T-cell (primary cell): ENCODE measurements at regions of chr15 and their contacts with region 1.

Region 1: DNA sequence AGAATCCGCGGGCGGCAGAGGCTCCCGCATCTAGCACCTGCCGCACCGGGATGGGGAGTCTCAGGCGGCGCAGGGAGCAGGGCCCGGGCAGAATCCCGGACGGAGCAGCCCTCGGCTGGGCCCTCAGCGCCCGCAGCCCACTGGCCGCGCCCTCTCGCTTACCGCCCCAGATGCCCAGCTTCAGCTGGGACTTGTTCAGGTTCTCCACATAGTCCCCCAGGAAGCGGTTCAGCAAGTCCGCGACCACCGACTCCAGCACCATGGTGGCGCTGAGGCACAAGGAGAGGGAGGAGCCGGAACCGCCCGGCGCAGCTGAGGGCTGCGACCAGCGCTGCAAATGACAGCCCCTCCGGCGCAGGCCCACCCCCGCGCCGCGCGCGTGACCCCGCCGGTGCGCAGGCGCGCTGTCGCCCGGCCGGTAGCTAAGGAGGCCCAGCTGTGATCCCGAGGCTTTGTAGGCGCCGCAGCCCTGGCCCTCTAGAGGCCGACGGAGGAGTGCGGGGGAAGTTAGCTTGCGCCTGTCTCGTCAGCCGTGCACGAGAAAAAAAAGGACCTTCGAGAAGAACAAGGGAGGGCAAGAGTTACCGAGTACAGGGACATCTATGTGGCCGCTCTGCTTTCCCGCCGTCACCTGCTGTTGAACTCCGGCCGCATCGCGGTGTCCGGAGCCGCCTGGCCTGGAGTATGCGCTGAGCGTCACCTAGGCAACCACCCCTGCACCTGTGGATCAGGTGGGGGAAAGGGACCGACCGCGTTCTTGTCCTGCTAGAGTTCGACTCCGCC is at the start of gene VPS13C:
- DNase-seq: peak; percentile 82 to 95 (median 87)
- ATAC-seq: peak; percentile 88 to 95 (median 93)
- H3K4me3 ChIP-seq: peak within 1 kb of the TSS; percentile 59 to 80
- H3K4me3 Mint-ChIP-seq: peak within 1 kb of the TSS; percentile 91 to 99 (median 96)
- H3K27ac ChIP-seq: peak within 1 kb of the TSS; percentile 87
- H3K27ac Mint-ChIP-seq: peak within 1 kb of the TSS; percentile 92 to 98
- H3K4me1 ChIP-seq: peaks cover 4 to 17% of the 10 kb centered on the region in 2 experiments
- H3K4me1 Mint-ChIP-seq: peaks cover 53 to 55% (median 55%) of the 10 kb centered on the region in 3 donors
- H3K27me3 ChIP-seq: peaks cover 0 to 7% of the 10 kb centered on the region in 2 experiments
- H3K27me3 Mint-ChIP-seq: peaks cover 0 to 3% of the 10 kb centered on the region in 2 donors
- total RNA-seq, gene VPS13C: 84.4 to 136 (median 117) TPM

Region 2: DNA sequence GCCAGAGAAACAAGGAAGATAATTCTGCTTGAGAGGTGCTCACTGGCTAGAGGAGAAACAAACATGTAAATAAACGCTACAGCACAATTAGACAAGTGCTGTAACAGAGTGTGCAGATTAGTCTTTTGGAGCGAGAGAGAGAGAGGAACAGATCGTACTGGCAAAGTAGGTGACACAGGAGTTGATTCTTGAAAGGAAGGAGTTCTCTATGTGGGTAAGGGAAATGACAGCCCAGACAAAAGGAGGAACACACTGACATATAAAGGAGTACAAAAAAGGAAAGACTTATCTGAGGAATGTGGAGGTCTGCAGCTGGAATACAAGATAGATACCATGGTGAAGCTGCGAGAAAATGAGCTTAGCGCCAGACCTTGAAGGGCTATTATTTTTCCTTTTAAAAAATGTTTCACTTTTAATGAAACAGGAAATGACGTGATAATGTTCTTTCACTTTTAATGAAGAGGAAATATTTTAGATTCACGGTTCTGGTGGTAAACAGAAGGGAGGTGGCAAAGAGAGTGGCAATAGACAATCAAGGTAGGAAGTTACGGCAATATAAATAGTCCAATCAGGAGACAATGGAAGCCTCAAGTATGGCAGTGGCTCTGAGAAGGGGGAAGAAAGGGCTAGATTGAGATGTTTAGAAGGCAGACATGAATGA is 203.0 kb before region 1 on chr15:
- CTCF ChIA-PET with region 1: no interaction called
- POLR2A ChIA-PET with region 1: interaction called in 1 of 2 experiments, 11 read pairs
- DNase-seq: peak in 5 of 35 experiments; percentile 4 to 68 (median 6)
- ATAC-seq: peak; percentile 69 to 91 (median 78)
- H3K4me3 ChIP-seq: peak overlapping the region in 1 of 2 donors; percentile 28
- H3K4me3 Mint-ChIP-seq: no peak overlapping the region
- H3K27ac ChIP-seq: peak overlapping the region; percentile 67
- H3K27ac Mint-ChIP-seq: no peak overlapping the region
- H3K4me1 ChIP-seq: peaks cover 0 to 5% of the 10 kb centered on the region in 2 experiments
- H3K4me1 Mint-ChIP-seq: peaks cover 0 to 10% (median 6%) of the 10 kb centered on the region in 3 donors
- H3K27me3 ChIP-seq: no peaks in the 10 kb centered on the region
- H3K27me3 Mint-ChIP-seq: no peaks in the 10 kb centered on the region

Region 3: DNA sequence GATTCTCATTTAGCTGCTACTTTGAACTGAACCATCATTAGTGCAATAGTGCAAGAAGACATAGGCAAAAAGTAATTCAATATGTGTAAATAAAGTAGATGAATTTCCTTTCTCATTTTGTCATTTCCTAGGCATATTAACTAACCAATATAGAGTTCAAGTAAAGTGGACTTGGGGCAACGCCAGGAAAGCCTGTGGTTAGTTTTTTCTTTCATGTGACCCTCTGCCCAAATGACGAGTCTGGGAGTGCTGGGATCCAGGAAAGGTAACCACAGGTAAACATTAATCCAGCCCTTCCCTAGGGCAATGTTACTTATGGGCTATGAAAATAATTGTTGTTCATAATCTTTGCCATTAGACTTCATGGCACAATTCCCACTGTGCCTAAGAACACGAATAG is 181.1 kb before region 1 on chr15:
- CTCF ChIA-PET with region 1: interaction called in 1 of 2 experiments, 10 read pairs
- POLR2A ChIA-PET with region 1: no interaction called
- DNase-seq: no peak
- ATAC-seq: no peak
- H3K4me3 ChIP-seq: no peak overlapping the region
- H3K4me3 Mint-ChIP-seq: no peak overlapping the region
- H3K27ac ChIP-seq: no peak overlapping the region
- H3K27ac Mint-ChIP-seq: no peak overlapping the region
- H3K4me1 ChIP-seq: no peaks in the 10 kb centered on the region
- H3K4me1 Mint-ChIP-seq: peaks cover 0 to 4% (median 0%) of the 10 kb centered on the region in 3 donors
- H3K27me3 ChIP-seq: no peaks in the 10 kb centered on the region
- H3K27me3 Mint-ChIP-seq: no peaks in the 10 kb centered on the region

Region 4: GRCh38 chr15:62248277-62248984 is 188.1 kb after region 1 on chr15:
- CTCF ChIA-PET with region 1: no interaction called
- POLR2A ChIA-PET with region 1: no interaction called
- DNase-seq: no peak
- ATAC-seq: no peak
- H3K4me3 ChIP-seq: no peak overlapping the region
- H3K4me3 Mint-ChIP-seq: no peak overlapping the region
- H3K27ac ChIP-seq: no peak overlapping the region
- H3K27ac Mint-ChIP-seq: no peak overlapping the region
- H3K4me1 ChIP-seq: no peaks in the 10 kb centered on the region
- H3K4me1 Mint-ChIP-seq: no peaks in the 10 kb centered on the region
- H3K27me3 ChIP-seq: peaks cover 0 to 14% of the 10 kb centered on the region in 2 experiments
- H3K27me3 Mint-ChIP-seq: peaks cover 8% of the 10 kb centered on the region in 2 donors